Breast epithelium (tissue), 4 donors: ENCODE measurements at regions of chr4 and their contacts with region 1.

Region 1: DNA sequence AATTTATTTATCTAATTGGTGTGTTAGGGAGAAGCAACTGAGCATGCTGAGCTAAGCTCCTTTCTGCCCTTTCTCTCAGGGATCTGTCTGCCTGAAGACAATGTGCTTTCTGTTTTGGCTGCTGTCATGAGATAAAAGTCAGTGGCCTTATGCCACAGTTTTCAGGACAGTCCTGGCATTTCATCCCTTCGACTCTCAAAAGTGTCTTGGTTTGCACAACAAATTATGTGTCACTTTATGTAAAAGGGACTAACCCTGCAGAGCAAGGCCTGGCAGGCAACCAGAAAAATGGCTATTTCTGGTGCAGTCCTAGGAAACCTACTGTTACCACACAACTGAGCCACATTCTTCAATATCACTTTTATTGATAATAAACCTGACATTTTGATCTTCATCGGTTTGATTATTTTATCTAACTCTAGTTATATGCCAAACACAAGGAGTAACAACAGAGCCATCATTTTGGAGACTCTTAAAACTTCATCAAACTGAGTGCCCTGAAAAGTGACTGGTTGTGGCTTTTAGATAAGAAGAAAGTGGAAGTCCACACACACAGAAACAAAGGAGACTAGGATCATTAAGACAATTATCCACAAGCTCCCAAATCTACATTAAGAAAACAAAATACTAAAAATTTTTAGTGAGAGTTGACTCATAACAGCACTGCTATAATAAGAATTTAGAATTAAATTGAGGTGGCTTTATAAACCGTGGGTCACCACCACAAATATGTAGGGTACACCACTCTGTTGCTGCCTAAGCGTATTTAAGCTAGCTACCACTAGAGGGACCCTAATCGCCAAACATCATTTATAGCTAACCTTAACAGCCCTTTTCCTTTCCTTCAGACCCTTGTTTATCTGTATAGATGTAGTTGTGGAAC is 95.9 kb upstream of the PTPN13 start:
- DNase-seq: peak in 1 of 2 donors; percentile 20
- H3K4me3 ChIP-seq: no peak overlapping the region
- H3K27ac ChIP-seq: peak overlapping the region; percentile 23 to 41
- H3K4me1 ChIP-seq: peaks cover 0 to 5% of the 10 kb centered on the region in 2 donors
- H3K27me3 ChIP-seq: no peaks in the 10 kb centered on the region
- CTCF ChIP-seq: peak; percentile 38 to 66 (median 62)
- POLR2A ChIP-seq: no peak

Region 2: DNA sequence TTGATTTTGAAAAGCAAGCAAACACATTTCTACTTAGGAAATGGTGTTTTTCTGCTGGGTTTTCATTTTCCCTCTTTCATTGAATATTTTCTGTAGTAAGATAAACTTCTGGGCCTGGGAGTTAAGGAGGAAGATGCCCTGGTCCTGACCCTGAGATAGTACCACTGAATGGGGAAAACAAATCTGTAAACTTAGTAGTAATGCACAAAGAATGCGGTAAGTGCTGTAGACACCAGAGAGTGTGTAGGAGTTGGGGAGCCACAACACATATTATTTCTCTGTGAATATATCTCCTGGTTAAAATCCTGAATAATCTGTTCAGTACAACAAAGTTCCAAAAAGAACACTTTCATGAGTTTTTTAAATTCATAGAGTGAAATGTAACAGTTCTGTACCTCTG is 316.6 kb before region 1 on chr4:
- intact Hi-C with region 1: no loop called
- DNase-seq: no peak
- H3K4me3 ChIP-seq: no peak overlapping the region
- H3K27ac ChIP-seq: no peak overlapping the region
- H3K4me1 ChIP-seq: no peaks in the 10 kb centered on the region
- H3K27me3 ChIP-seq: no peaks in the 10 kb centered on the region
- CTCF ChIP-seq: no peak
- POLR2A ChIP-seq: no peak

Region 3: GRCh38 chr4:86895692-86896488 is 397.7 kb after region 1 on chr4:
- intact Hi-C with region 1: loop called (anchors 2 kb)
- DNase-seq: no peak
- H3K4me3 ChIP-seq: no peak overlapping the region
- H3K27ac ChIP-seq: no peak overlapping the region
- H3K4me1 ChIP-seq: no peaks in the 10 kb centered on the region
- H3K27me3 ChIP-seq: no peaks in the 10 kb centered on the region
- CTCF ChIP-seq: peak; percentile 72 to 84 (median 83)
- POLR2A ChIP-seq: no peak